Activated CD4-positive, alpha-beta memory T cell treated with anti-CD3 and anti-CD28 coated beads for 36 hours (primary cell): ENCODE measurements at regions of chr3 and their contacts with region 1.

Region 1: GRCh38 chr3:71875461-71875947 is 90.6 kb upstream of the PROK2 start:
- DNase-seq: peak; percentile 90
- H3K4me3 Mint-ChIP-seq: no peak overlapping the region
- H3K27ac Mint-ChIP-seq: peak overlapping the region; percentile 71
- H3K4me1 Mint-ChIP-seq: peaks cover 37% of the 10 kb centered on the region
- H3K27me3 Mint-ChIP-seq: peaks cover 5% of the 10 kb centered on the region

Region 2: DNA sequence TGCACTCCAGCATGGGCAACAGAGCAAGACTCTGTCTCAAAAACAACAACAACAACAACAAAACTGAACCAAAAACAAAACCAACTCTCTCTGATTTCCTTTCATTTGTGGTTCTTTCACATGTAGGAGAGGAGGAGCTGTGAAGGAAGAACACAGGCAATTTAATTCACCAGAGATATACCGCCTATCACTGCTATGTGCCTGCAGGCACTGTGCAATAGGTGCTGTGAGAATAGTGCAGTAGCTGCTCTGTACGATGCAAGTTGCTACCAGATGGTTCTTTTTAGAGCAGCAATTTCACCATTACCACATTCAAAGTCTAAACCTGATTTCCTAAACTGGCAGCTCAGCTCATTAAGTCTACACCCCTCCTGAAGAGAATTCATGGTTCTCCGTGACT is 79.2 kb before region 1 on chr3:
- CTCF ChIA-PET with region 1: no interaction called
- POLR2A ChIA-PET with region 1: no interaction called
- intact Hi-C with region 1: no loop called
- DNase-seq: no peak
- H3K4me3 Mint-ChIP-seq: no peak overlapping the region
- H3K27ac Mint-ChIP-seq: no peak overlapping the region
- H3K4me1 Mint-ChIP-seq: no peaks in the 10 kb centered on the region
- H3K27me3 Mint-ChIP-seq: peaks cover 3% of the 10 kb centered on the region

Region 3: GRCh38 chr3:71859123-71859519 is 16.4 kb before region 1 on chr3:
- CTCF ChIA-PET with region 1: interaction called, 11 read pairs
- POLR2A ChIA-PET with region 1: no interaction called
- intact Hi-C with region 1: no loop called
- DNase-seq: no peak
- H3K4me3 Mint-ChIP-seq: no peak overlapping the region
- H3K27ac Mint-ChIP-seq: no peak overlapping the region
- H3K4me1 Mint-ChIP-seq: peaks cover 15% of the 10 kb centered on the region
- H3K27me3 Mint-ChIP-seq: peaks cover 27% of the 10 kb centered on the region

Region 4: DNA sequence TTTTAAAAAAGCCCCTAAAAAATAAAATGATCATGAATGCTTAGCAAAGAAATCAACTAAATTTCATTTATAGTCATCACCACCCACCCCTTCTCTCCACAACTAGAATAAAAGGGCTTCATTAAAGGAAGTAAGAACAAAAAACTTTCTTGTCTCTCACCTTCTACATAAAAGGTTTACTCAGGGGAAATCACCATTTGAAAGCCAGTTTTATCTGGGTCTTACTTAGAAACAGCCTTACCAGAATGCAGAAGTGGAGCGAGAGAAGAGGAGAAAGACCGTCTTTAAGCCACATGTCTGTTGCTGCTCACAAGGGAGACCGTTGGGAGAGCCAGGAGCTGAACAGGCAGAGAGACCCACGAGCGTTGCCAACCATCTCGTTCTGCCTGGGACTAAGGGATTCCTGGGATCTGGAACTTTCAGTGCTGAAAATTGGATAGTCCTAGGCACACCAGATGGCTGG is 259.5 kb after region 1 on chr3:
- CTCF ChIA-PET with region 1: interaction called, 6 read pairs
- POLR2A ChIA-PET with region 1: no interaction called
- intact Hi-C with region 1: loop called (anchors 10 kb)
- DNase-seq: peak; percentile 25
- H3K4me3 Mint-ChIP-seq: peak overlapping the region; percentile 59
- H3K27ac Mint-ChIP-seq: peak overlapping the region; percentile 85
- H3K4me1 Mint-ChIP-seq: peaks cover 47% of the 10 kb centered on the region
- H3K27me3 Mint-ChIP-seq: no peaks in the 10 kb centered on the region

Region 5: GRCh38 chr3:72447059-72447946 is 571.8 kb after region 1 on chr3:
- CTCF ChIA-PET with region 1: interaction called, 4 read pairs
- POLR2A ChIA-PET with region 1: no interaction called
- intact Hi-C with region 1: loop called (anchors 10 kb)
- DNase-seq: peak; percentile 93
- H3K4me3 Mint-ChIP-seq: peak overlapping the region; percentile 61
- H3K27ac Mint-ChIP-seq: no peak overlapping the region
- H3K4me1 Mint-ChIP-seq: peaks cover 34% of the 10 kb centered on the region
- H3K27me3 Mint-ChIP-seq: peaks cover 23% of the 10 kb centered on the region

Region 6: GRCh38 chr3:72818092-72818773 is 942.7 kb after region 1 on chr3:
- CTCF ChIA-PET with region 1: interaction called, 40 read pairs
- POLR2A ChIA-PET with region 1: no interaction called
- intact Hi-C with region 1: loop called (anchors 1 kb)
- DNase-seq: no peak
- H3K4me3 Mint-ChIP-seq: no peak overlapping the region
- H3K27ac Mint-ChIP-seq: no peak overlapping the region
- H3K4me1 Mint-ChIP-seq: peaks cover 22% of the 10 kb centered on the region
- H3K27me3 Mint-ChIP-seq: no peaks in the 10 kb centered on the region